GM10248 (cell line): ENCODE measurements at regions of chr10 and their contacts with region 1.

Region 1: DNA sequence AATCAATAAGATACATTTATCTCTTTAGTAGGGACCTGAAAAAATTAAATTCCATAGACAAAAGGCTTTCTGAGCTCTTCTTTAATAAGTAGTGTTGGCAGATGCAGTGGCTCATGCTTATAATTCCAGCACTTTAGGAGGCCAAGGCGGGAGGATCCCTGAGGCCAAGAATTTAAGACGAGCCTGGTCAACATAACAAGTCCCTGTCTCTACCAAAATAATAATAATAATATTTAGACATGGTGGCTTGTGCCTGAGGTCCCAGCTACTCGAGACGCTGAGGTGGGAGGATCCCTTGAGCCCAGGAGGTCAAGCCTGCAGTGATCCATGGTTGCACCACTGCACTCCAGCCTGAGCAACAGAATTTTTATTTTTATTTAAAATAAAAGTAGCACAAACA is 280.8 kb downstream of the ADK start:
- DNase-seq: no peak
- CTCF ChIP-seq: no peak

Region 2: GRCh38 chr10:74419958-74420375 is 11.8 kb before region 1 on chr10:
- CTCF ChIA-PET with region 1: interaction called, 16 read pairs
- POLR2A ChIA-PET with region 1: no interaction called
- DNase-seq: peak; percentile 10
- CTCF ChIP-seq: no peak

Region 3: DNA sequence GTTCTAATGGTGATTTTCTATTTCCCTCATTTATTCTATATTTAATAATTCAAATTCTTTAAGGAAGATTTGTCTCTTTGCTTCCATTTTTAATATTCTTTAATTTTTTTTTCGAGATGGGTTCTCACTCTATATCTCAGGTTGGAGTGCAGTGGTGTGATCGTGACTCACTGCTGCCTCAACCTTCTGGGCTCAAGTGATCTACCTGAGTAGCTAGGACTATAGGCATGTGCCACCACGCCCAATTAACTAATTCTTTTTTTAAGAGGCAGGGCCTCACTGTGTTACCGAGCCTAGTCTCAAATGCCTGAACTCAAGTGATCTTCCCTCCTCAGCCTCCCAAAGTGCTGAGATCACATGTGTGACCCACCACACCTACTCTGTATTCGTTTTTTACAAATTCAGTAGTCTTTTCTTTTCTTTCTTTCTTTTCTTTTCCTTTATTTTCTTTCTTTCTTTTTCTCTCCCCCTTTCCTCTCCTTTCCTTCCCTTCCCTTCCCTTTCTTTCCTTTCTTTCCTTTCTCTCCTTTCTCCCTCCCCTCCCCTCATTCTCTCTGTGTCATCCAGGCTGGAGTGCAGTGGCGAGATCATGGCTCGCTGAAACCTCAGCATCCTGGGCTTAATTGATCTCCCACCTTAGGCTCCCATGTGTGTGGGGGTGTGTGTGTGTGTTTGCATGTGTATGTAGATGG is 42.4 kb after region 1 on chr10:
- CTCF ChIA-PET with region 1: no interaction called
- POLR2A ChIA-PET with region 1: no interaction called
- DNase-seq: no peak
- CTCF ChIP-seq: no peak

Region 4: DNA sequence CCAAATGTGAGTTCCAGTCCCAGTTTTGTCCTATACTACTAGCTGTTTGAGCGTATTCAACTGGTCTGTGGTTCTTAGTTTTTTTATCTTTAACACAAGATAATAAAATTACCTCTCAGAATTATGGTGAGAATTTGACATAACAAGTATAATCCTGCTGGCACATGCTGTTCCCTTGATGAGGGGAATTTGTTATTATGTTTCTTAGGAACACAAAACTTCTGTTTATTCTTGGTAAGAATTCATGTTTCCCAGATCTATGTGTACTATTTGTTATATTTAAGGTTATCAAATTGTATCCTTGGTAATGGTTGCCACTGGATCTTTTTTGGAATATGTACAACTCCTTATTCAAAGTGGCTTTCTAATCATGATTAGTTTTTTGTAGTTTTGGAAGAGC is 54.8 kb after region 1 on chr10:
- CTCF ChIA-PET with region 1: no interaction called
- POLR2A ChIA-PET with region 1: no interaction called
- DNase-seq: no peak
- CTCF ChIP-seq: no peak